ENCODE measurements at regions of chr5 and their contacts with region 1.

Region 1: GRCh38 chr5:145774442-145774841 is 60.7 kb downstream of the PRELID2 start:
- DNase-seq: no peak
- H3K4me3 ChIP-seq: no peak overlapping the region
- H3K27ac ChIP-seq: no peak overlapping the region
- H3K4me1 ChIP-seq: no peaks in the 10 kb centered on the region
- H3K27me3 ChIP-seq: no peaks in the 10 kb centered on the region
- CTCF ChIP-seq: no peak

Region 2: DNA sequence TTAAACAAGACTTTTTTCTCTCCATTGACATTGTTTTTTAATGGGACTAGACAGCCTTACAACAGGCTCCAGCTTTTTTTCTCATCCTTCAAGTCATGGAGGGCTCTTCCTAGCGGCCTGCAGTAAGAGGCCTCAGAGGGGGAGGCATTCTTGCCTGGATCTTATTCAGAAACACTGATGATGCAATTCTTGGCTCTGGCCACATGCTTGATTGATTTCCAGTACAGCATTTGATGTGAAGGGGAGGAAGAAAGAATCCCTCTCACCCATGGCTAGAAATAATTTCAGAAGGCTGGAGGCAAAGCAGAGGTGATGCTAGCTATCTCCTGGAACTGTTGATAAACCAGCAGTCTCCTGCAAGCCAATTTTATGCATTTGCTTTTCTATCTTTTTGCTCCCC is 264.1 kb before region 1 on chr5:
- CTCF ChIA-PET with region 1: no interaction called
- POLR2A ChIA-PET with region 1: no interaction called
- intact Hi-C with region 1: no loop called
- DNase-seq: peak; percentile 29
- H3K4me3 ChIP-seq: no peak overlapping the region
- H3K27ac ChIP-seq: no peak overlapping the region
- H3K4me1 ChIP-seq: peaks cover 31% of the 10 kb centered on the region
- H3K27me3 ChIP-seq: no peaks in the 10 kb centered on the region
- CTCF ChIP-seq: no peak

Region 3: DNA sequence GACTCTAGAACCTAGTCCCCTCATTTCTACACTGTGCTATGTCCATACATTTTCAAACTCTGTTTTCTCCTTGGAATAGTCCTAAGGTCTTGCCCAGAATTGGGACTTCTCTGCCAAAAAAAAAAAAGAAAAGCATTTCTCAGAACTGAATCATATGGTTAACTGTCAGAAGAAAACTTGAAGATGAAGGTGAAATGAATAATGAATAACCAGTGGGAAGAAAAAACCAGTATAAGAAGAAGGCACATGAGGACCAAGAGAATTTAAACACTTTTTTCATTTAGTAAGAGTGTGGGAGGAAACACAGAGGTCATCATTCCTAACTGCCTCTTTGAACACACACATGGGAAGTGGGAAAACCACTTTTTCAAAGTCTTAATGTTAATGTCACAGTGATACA is 137.0 kb before region 1 on chr5:
- CTCF ChIA-PET with region 1: no interaction called
- POLR2A ChIA-PET with region 1: interaction called, 10 read pairs
- intact Hi-C with region 1: no loop called
- DNase-seq: no peak
- H3K4me3 ChIP-seq: no peak overlapping the region
- H3K27ac ChIP-seq: no peak overlapping the region
- H3K4me1 ChIP-seq: no peaks in the 10 kb centered on the region
- H3K27me3 ChIP-seq: no peaks in the 10 kb centered on the region
- CTCF ChIP-seq: no peak

Region 4: GRCh38 chr5:147113967-147114366 is 1339.5 kb after region 1 on chr5:
- CTCF ChIA-PET with region 1: no interaction called
- POLR2A ChIA-PET with region 1: no interaction called
- intact Hi-C with region 1: no loop called
- DNase-seq: no peak
- H3K4me3 ChIP-seq: no peak overlapping the region
- H3K27ac ChIP-seq: no peak overlapping the region
- H3K4me1 ChIP-seq: no peaks in the 10 kb centered on the region
- H3K27me3 ChIP-seq: peaks cover 5% of the 10 kb centered on the region
- CTCF ChIP-seq: no peak